PC-3 (cell line): ENCODE measurements at regions of chr7 and their contacts with region 1.

Region 1: GRCh38 chr7:20598459-20599309 is 16.8 kb upstream of the ABCB5 start:
- DNase-seq: peak; percentile 84
- ATAC-seq: peak; percentile 83
- H3K4me3 ChIP-seq: peak overlapping the region; percentile 69
- H3K27ac ChIP-seq: peak overlapping the region; percentile 87
- H3K4me1 ChIP-seq: peaks cover 27% of the 10 kb centered on the region
- H3K27me3 ChIP-seq: no peaks in the 10 kb centered on the region
- CTCF ChIP-seq: peak; percentile 93

Region 2: GRCh38 chr7:19713676-19714075 is 885.0 kb before region 1 on chr7:
- CTCF ChIA-PET with region 1: interaction called, 75 read pairs
- POLR2A ChIA-PET with region 1: no interaction called
- intact Hi-C with region 1: loop called (anchors 1 kb)
- DNase-seq: peak; percentile 82
- ATAC-seq: 0 out of 2 replicates have a peak, but pooled peaks have one; percentile 31
- H3K4me3 ChIP-seq: no peak overlapping the region
- H3K27ac ChIP-seq: no peak overlapping the region
- H3K4me1 ChIP-seq: peaks cover 5% of the 10 kb centered on the region; the same call in 1 of the 2 replicates
- H3K27me3 ChIP-seq: no peaks in the 10 kb centered on the region
- CTCF ChIP-seq: peak; percentile 78

Region 3: DNA sequence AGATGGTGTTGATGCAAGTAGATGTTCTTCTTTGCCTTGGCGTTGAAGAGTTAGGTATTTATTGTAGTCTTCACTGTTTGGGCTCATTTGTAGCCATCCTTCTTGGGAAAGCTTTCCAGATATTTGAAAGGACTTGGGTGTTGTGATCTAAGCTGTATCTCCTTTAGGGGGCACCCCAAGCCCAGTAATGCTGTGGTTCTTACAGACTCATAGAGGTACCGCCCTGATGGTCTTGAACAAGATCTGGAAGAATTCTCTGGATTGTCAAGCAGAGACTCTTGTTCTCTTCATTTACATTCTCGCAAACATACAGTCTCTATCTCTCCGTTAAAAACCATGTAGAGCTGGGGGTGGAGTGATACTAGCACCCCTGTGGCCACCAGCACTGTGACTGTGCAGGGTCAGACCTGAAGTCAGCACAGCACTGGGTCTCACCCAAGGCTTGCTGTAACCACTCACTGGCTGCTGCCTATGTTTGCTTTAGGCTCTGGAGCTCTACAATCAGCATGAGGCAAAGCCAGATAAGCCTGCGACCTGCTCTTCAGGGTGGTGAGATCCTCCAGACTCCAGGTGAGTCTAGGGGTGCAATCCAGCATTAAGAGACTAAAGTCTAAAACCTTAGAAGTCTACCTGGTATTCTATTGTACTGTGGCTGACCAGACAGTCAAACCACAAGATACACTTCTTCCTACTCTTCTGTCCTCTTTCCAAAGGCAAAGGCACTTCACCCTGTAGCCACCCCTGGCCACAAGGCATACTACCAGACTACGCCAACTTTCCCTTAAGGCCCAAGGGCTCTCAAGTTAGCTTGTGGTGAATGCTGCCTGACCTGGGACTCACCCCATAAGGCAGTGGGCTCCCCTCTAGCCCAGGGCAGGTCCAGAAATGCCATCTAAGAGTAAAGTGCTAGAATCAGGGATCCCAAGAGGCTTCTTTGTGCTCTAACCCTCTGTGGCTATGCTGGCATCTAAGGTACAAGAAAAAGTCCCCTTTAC is 615.5 kb before region 1 on chr7:
- CTCF ChIA-PET with region 1: no interaction called
- POLR2A ChIA-PET with region 1: no interaction called
- intact Hi-C with region 1: loop called (anchors 1 kb)
- DNase-seq: peak; percentile 69
- ATAC-seq: peak; percentile 66
- H3K4me3 ChIP-seq: no peak overlapping the region
- H3K27ac ChIP-seq: no peak overlapping the region
- H3K4me1 ChIP-seq: no peaks in the 10 kb centered on the region
- H3K27me3 ChIP-seq: no peaks in the 10 kb centered on the region
- CTCF ChIP-seq: peak; percentile 61

Region 4: GRCh38 chr7:20310963-20311742 is 287.5 kb before region 1 on chr7:
- CTCF ChIA-PET with region 1: interaction called, 4 read pairs
- POLR2A ChIA-PET with region 1: no interaction called
- intact Hi-C with region 1: loop called (anchors 5 kb)
- DNase-seq: peak; percentile 81
- ATAC-seq: peak; percentile 45; the same call in 1 of the 2 replicates
- H3K4me3 ChIP-seq: no peak overlapping the region
- H3K27ac ChIP-seq: no peak overlapping the region
- H3K4me1 ChIP-seq: no peaks in the 10 kb centered on the region
- H3K27me3 ChIP-seq: no peaks in the 10 kb centered on the region
- CTCF ChIP-seq: peak; percentile 75

Region 5: GRCh38 chr7:20393021-20393610 is 205.6 kb before region 1 on chr7:
- CTCF ChIA-PET with region 1: interaction called, 3 read pairs
- POLR2A ChIA-PET with region 1: no interaction called
- intact Hi-C with region 1: loop called (anchors 2 kb)
- DNase-seq: peak; percentile 74
- ATAC-seq: peak; percentile 81
- H3K4me3 ChIP-seq: peak overlapping the region; percentile 40
- H3K27ac ChIP-seq: peak overlapping the region; percentile 97
- H3K4me1 ChIP-seq: peaks cover 49% of the 10 kb centered on the region
- H3K27me3 ChIP-seq: no peaks in the 10 kb centered on the region
- CTCF ChIP-seq: no peak

Region 6: DNA sequence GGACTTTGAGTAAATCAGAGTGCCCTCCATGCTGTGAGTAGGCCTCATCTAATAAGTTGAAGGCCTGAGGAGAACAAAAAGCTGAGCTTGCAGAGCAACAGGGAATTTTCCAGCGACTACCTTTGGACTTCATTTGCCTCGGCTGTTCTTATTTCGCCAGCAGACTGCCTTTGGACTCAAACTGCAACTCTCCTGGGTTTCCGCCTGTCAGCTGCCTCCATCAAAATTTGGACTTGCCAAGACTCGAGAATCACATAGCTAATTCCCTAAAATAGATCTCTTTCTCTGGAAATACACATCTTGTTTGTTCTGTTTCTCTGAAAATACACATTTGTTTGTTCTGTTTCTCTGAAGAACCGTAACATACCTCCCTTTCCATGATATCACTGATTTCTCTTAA is 174.2 kb before region 1 on chr7:
- CTCF ChIA-PET with region 1: no interaction called
- POLR2A ChIA-PET with region 1: no interaction called
- intact Hi-C with region 1: no loop called
- DNase-seq: no peak
- ATAC-seq: no peak
- H3K4me3 ChIP-seq: no peak overlapping the region
- H3K27ac ChIP-seq: no peak overlapping the region
- H3K4me1 ChIP-seq: no peaks in the 10 kb centered on the region
- H3K27me3 ChIP-seq: no peaks in the 10 kb centered on the region
- CTCF ChIP-seq: no peak